Activated CD8-positive, alpha-beta T cell treated with anti-CD3 and anti-CD28 coated beads for 36 hours (primary cell): ENCODE measurements at regions of chr10 and their contacts with region 1.

Region 1: GRCh38 chr10:104580774-104581675 is 60.1 kb upstream of the SORCS3 start:
- DNase-seq: peak; percentile 82
- ATAC-seq: peak; percentile 75
- H3K4me3 Mint-ChIP-seq: no peak overlapping the region
- H3K27ac Mint-ChIP-seq: no peak overlapping the region
- H3K4me1 Mint-ChIP-seq: peaks cover 7% of the 10 kb centered on the region
- H3K27me3 Mint-ChIP-seq: peaks cover 16% of the 10 kb centered on the region
- CTCF ChIP-seq: peak; percentile 90

Region 2: DNA sequence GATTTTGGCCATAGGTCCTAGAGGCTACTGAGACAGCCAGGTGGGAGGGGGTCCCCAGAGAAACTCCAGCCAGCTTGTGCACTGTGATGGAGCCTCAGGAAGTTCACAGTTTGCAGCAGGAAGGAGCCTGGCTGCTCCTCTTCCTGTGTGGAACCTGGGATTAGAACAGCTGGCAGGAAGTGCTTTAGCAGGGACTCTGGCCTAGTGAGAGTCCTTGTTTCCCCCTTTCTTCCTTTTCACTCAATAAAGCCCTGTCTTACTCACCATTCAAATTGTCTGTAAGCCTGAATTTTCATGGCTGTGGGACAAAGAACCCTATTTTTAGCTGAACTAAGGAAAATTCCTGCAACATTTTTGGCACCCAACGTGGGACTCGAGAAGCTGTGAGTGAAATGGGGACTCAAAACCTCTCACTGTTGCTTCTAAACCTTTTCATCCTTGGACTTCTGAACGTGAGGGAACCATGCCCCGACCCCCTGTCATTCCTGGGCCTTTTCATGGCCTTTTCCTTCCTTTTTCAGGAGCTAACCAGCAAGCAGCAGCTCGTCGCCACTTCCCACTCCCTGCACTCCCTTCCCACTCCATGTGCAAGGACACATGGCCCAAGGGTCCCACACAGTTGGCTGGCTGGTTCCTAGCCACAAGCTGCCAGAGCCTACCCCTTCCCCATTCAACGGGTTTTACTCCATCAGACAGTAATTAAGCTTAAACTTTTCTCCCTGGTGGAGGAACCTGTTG is 27.2 kb after region 1 on chr10:
- CTCF ChIA-PET with region 1: interaction called, 12 read pairs
- POLR2A ChIA-PET with region 1: no interaction called
- intact Hi-C with region 1: no loop called
- DNase-seq: no peak
- ATAC-seq: no peak
- H3K4me3 Mint-ChIP-seq: no peak overlapping the region
- H3K27ac Mint-ChIP-seq: no peak overlapping the region
- H3K4me1 Mint-ChIP-seq: no peaks in the 10 kb centered on the region
- H3K27me3 Mint-ChIP-seq: peaks cover 9% of the 10 kb centered on the region
- CTCF ChIP-seq: no peak

Region 3: DNA sequence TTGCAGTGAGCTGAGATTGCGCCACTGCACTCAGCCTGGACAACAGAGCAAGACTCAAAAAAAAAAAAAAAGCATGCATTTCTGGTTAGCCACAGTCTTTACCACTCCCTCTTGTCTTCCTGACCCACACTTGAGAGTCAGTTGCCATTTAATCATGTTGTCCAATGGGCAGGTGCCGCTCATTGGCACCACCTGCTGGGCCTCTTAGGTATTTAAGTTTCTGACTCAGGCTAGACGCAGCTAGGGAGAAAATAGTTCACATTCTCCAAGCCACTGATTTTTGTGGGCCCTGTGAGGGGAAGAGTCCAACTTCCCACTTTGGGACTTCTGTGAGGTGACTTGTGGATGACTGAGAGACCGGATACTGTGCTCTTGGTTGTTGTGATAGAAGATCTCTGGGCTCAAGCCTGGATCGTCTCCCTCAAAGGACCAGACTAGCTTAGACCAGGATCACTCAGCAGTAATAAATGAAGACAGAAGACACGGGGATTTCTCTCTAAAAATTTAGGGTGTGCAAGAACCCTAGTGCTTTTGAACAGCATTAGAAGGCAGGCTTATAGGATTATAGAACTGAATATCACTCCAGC is 33.3 kb after region 1 on chr10:
- CTCF ChIA-PET with region 1: interaction called, 17 read pairs
- POLR2A ChIA-PET with region 1: no interaction called
- intact Hi-C with region 1: loop called (anchors 2 kb)
- DNase-seq: peak; percentile 61
- ATAC-seq: peak; percentile 74
- H3K4me3 Mint-ChIP-seq: no peak overlapping the region
- H3K27ac Mint-ChIP-seq: no peak overlapping the region
- H3K4me1 Mint-ChIP-seq: no peaks in the 10 kb centered on the region
- H3K27me3 Mint-ChIP-seq: peaks cover 13% of the 10 kb centered on the region
- CTCF ChIP-seq: peak; percentile 68

Region 4: DNA sequence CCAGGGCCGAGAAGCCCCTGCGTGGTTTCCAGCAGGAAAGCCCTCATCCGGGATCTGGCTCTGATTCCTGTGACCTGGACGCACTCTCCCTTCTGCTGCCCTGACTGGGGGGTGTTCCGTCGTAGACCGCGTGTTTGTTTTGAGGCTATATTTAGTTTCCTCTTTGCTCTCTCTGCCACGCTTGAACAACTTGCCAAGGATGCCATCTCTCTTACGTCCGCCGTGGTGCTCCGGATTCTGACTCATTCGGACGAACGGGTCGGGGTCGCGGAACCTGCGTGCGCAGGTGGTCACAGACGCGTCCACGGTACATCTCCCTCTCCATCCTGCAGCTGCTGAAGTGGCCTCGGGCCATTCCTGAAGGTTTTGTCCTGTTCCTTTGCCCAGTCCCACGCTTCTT is 49.7 kb after region 1 on chr10:
- CTCF ChIA-PET with region 1: no interaction called
- POLR2A ChIA-PET with region 1: no interaction called
- intact Hi-C with region 1: no loop called
- DNase-seq: no peak
- ATAC-seq: no peak
- H3K4me3 Mint-ChIP-seq: no peak overlapping the region
- H3K27ac Mint-ChIP-seq: no peak overlapping the region
- H3K4me1 Mint-ChIP-seq: no peaks in the 10 kb centered on the region
- H3K27me3 Mint-ChIP-seq: peaks cover 26% of the 10 kb centered on the region
- CTCF ChIP-seq: no peak